ENCODE measurements at regions of chr19 and their contacts with region 1.

Region 1: DNA sequence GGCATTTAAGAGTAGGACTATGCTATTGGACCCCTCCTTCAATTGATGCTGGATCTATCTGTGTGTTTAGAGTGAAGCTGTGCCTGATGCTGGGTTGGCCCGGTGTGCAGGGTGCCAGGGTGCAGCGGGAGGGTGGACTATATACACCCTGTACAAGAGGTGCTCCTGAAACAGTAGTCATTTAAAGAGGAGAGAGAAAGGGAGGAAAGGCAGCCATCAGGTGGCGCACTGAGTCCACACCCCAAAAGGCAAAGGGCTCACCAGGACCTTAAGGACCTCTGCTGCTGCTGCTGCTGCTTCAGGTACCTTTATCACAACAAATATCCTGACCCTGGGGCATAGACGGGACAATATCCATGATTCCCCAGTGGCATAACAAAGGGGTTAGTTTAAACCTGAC is 39.4 kb downstream of the ZNF136 start:
- DNase-seq: peak; percentile 80
- ATAC-seq: peak; percentile 96
- H3K4me3 Mint-ChIP-seq: no peak overlapping the region
- H3K27ac Mint-ChIP-seq: no peak overlapping the region
- H3K4me1 Mint-ChIP-seq: peaks cover 23% of the 10 kb centered on the region
- H3K27me3 Mint-ChIP-seq: no peaks in the 10 kb centered on the region

Region 2: GRCh38 chr19:12346896-12347295 is 144.6 kb after region 1 on chr19:
- CTCF ChIA-PET with region 1: no interaction called
- POLR2A ChIA-PET with region 1: no interaction called
- intact Hi-C with region 1: loop called (anchors 1 kb)
- DNase-seq: peak; percentile 29
- ATAC-seq: peak; percentile 58
- H3K4me3 Mint-ChIP-seq: no peak overlapping the region
- H3K27ac Mint-ChIP-seq: no peak overlapping the region
- H3K4me1 Mint-ChIP-seq: no peaks in the 10 kb centered on the region
- H3K27me3 Mint-ChIP-seq: no peaks in the 10 kb centered on the region

Region 3: GRCh38 chr19:12453491-12453890 is 251.2 kb after region 1 on chr19:
- CTCF ChIA-PET with region 1: no interaction called
- POLR2A ChIA-PET with region 1: no interaction called
- intact Hi-C with region 1: loop called in 1 of 2 experiments (anchors 10 kb)
- DNase-seq: no peak
- ATAC-seq: no peak
- H3K4me3 Mint-ChIP-seq: no peak overlapping the region
- H3K27ac Mint-ChIP-seq: no peak overlapping the region
- H3K4me1 Mint-ChIP-seq: no peaks in the 10 kb centered on the region
- H3K27me3 Mint-ChIP-seq: no peaks in the 10 kb centered on the region